Activated naive CD4-positive, alpha-beta T cell treated with anti-CD3 and anti-CD28 coated beads, Interleukin-2, amount 10 ng/mL, durations not matched to agents 7 days and 5 days (primary cell): ENCODE measurements at regions of chr5 and their contacts with region 1.

Region 1: GRCh38 chr5:95664204-95664786 is 17.7 kb downstream of the RFESD start:
- DNase-seq: peak; percentile 47
- H3K4me3 Mint-ChIP-seq: no peak overlapping the region
- H3K27ac Mint-ChIP-seq: no peak overlapping the region
- H3K4me1 Mint-ChIP-seq: no peaks in the 10 kb centered on the region
- H3K27me3 Mint-ChIP-seq: no peaks in the 10 kb centered on the region

Region 2: GRCh38 chr5:95646554-95647431 is 17.5 kb before region 1 on chr5 and contains the start of gene RFESD:
- CTCF ChIA-PET with region 1: interaction called, 15 read pairs
- DNase-seq: peak; percentile 98
- H3K4me3 Mint-ChIP-seq: peak within 1 kb of the TSS; percentile 77
- H3K27ac Mint-ChIP-seq: peak within 1 kb of the TSS; percentile 95
- H3K4me1 Mint-ChIP-seq: peaks cover 45% of the 10 kb centered on the region
- H3K27me3 Mint-ChIP-seq: no peaks in the 10 kb centered on the region

Region 3: DNA sequence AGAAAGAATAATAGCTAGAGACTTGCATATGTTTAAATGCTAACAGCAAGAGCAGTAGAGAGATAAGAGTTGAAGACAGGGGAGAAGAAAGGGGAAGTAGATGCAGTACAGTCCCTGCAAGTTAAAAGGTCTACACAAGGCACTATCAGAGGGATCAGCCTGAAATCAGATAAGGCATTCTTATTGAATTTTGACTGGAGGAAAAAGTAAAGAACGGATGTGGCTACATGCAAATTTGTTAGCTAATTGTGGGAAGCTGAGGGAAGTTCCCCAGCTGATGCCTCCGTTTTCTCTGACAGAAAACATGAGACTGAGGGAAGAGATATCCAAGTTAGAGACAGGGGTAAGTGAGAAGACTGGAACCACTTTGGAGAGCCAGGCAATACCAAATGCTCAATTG is 53.9 kb after region 1 on chr5:
- CTCF ChIA-PET with region 1: no interaction called
- DNase-seq: no peak
- H3K4me3 Mint-ChIP-seq: no peak overlapping the region
- H3K27ac Mint-ChIP-seq: no peak overlapping the region
- H3K4me1 Mint-ChIP-seq: peaks cover 7% of the 10 kb centered on the region
- H3K27me3 Mint-ChIP-seq: peaks cover 10% of the 10 kb centered on the region

Region 4: GRCh38 chr5:95770830-95771708 is 106.8 kb after region 1 on chr5:
- CTCF ChIA-PET with region 1: interaction called, 12 read pairs
- DNase-seq: no peak
- H3K4me3 Mint-ChIP-seq: no peak overlapping the region
- H3K27ac Mint-ChIP-seq: no peak overlapping the region
- H3K4me1 Mint-ChIP-seq: peaks cover 2% of the 10 kb centered on the region
- H3K27me3 Mint-ChIP-seq: peaks cover 19% of the 10 kb centered on the region

Region 5: DNA sequence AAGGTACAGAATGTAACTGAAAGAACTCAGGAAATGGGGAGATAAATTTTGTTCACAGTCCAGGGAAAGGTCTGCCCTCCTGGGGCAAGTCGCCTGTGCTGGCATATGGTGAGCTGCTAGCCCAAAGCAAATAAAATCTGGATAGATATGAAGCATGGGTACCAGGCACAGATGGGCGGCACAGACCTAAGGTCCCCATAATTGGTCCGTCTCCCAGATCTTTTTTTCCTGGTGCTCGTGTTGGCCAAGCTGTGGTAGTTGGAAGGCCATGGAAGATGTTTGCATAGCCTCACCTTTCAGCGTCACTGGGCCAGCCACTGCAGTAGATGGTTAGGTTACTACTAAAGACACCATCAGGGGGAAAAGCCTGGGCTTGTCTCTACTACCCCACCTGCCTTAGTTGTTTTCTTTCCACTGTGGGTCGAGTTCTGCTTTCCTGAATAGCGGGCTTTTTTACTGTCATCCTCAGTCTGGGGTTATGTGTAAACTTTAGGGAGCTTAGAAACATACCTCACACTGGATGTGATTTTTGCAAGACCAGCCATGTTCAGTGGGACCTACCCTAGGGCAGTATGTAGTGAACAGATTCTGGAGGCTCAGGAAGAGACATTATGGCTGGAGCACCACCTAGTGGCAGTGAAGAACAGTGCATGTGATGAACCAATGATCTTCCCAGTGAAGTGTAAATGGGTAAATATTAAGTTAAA is 182.4 kb after region 1 on chr5:
- CTCF ChIA-PET with region 1: interaction called, 37 read pairs
- DNase-seq: peak; percentile 76
- H3K4me3 Mint-ChIP-seq: no peak overlapping the region
- H3K27ac Mint-ChIP-seq: no peak overlapping the region
- H3K4me1 Mint-ChIP-seq: peaks cover 21% of the 10 kb centered on the region
- H3K27me3 Mint-ChIP-seq: peaks cover 15% of the 10 kb centered on the region